ENCODE measurements at regions of chr10 and their contacts with region 1.

Region 1: GRCh38 chr10:62610649-62611229 is 193.8 kb upstream of the ADO start:
- DNase-seq: no peak
- H3K4me3 ChIP-seq: no peak overlapping the region
- CTCF ChIP-seq: peak; percentile 85

Region 2: GRCh38 chr10:62594093-62594520 is 16.6 kb before region 1 on chr10:
- CTCF ChIA-PET with region 1: interaction called, 40 read pairs
- POLR2A ChIA-PET with region 1: no interaction called
- DNase-seq: no peak
- H3K4me3 ChIP-seq: no peak overlapping the region
- CTCF ChIP-seq: peak; percentile 93

Region 3: GRCh38 chr10:62681211-62681940 is 70.6 kb after region 1 on chr10:
- CTCF ChIA-PET with region 1: no interaction called
- POLR2A ChIA-PET with region 1: no interaction called
- DNase-seq: no peak
- H3K4me3 ChIP-seq: no peak overlapping the region
- CTCF ChIP-seq: no peak

Region 4: GRCh38 chr10:62831346-62831745 is 220.6 kb after region 1 on chr10:
- CTCF ChIA-PET with region 1: interaction called, 10 read pairs
- POLR2A ChIA-PET with region 1: no interaction called
- DNase-seq: peak; percentile 42
- H3K4me3 ChIP-seq: no peak overlapping the region
- CTCF ChIP-seq: no peak

Region 5: DNA sequence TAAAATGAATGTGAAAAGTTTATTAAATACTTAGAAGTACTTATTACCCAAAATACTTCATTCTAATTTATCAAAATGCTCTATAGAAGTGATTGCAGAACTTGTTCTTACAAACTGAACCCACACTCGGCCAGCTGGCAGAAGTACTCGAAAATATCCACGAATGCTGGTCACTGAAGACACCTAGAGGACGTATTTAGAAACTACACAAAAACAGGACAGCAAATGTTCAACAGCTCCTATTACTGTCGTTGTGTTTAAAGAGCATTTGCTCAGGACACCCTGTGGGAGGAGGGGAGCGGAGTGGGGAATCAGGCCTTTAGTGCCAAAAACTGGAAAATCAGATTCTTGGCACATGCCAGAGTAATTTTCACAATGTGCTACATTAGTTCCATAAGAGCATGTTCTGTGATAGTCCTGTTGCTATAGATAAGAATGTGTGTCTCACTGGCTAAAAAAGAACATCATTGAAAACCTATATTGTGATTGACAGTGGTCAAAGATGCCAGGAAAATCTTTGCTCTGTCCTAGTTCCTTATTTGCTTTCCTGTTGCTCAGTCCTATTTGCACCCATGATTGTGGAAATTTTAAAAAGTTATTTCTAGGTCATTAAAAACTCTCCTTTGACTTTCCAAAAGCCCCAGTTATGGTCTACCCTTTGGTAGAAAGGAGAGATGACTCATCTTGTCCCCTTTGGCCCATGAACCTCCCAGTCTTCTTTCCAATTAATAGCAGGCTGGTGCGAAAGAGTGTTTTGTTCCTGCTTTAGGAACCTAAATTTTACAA is 473.4 kb after region 1 on chr10:
- CTCF ChIA-PET with region 1: interaction called, 29 read pairs
- POLR2A ChIA-PET with region 1: no interaction called
- DNase-seq: peak; percentile 29
- H3K4me3 ChIP-seq: no peak overlapping the region
- CTCF ChIP-seq: peak; percentile 60

Region 6: GRCh38 chr10:63337455-63338251 is 726.9 kb after region 1 on chr10:
- CTCF ChIA-PET with region 1: no interaction called
- POLR2A ChIA-PET with region 1: no interaction called
- DNase-seq: no peak
- H3K4me3 ChIP-seq: no peak overlapping the region
- CTCF ChIP-seq: no peak